GM12878 (cell line): ENCODE measurements at regions of chr2 and their contacts with region 1.

Region 1: GRCh38 chr2:224927646-224928173 is 114.6 kb downstream of the DOCK10 start:
- DNase-seq: no peak
- ATAC-seq: no peak
- H3K4me3 ChIP-seq: no peak overlapping the region
- H3K27ac ChIP-seq: peak overlapping the region; percentile 71
- H3K4me1 ChIP-seq: peaks cover 62% of the 10 kb centered on the region
- H3K27me3 ChIP-seq: no peaks in the 10 kb centered on the region
- CTCF ChIP-seq: no peak
- EP300 ChIP-seq: no peak
- POLR2A ChIP-seq: no peak
- RAD21 ChIP-seq: no peak

Region 2: GRCh38 chr2:224894356-224894755 is 33.4 kb before region 1 on chr2:
- CTCF ChIA-PET with region 1: interaction called, 11 read pairs
- POLR2A ChIA-PET with region 1: interaction called, 4 read pairs
- RAD21 ChIA-PET with region 1: interaction called, 17 read pairs
- SMC1A ChIA-PET with region 1: interaction called, 26 read pairs
- in situ Hi-C with region 1: no loop called
- intact Hi-C with region 1: loop called (anchors 2 kb)
- DNase-seq: peak; percentile 71
- ATAC-seq: peak; percentile 90
- H3K4me3 ChIP-seq: peak overlapping the region; percentile 13; the same call in 1 of the 2 replicates
- H3K27ac ChIP-seq: peak overlapping the region; percentile 88
- H3K4me1 ChIP-seq: peaks cover 40% of the 10 kb centered on the region
- H3K27me3 ChIP-seq: no peaks in the 10 kb centered on the region
- CTCF ChIP-seq: no peak
- EP300 ChIP-seq: no peak
- POLR2A ChIP-seq: no peak
- RAD21 ChIP-seq: no peak

Region 3: DNA sequence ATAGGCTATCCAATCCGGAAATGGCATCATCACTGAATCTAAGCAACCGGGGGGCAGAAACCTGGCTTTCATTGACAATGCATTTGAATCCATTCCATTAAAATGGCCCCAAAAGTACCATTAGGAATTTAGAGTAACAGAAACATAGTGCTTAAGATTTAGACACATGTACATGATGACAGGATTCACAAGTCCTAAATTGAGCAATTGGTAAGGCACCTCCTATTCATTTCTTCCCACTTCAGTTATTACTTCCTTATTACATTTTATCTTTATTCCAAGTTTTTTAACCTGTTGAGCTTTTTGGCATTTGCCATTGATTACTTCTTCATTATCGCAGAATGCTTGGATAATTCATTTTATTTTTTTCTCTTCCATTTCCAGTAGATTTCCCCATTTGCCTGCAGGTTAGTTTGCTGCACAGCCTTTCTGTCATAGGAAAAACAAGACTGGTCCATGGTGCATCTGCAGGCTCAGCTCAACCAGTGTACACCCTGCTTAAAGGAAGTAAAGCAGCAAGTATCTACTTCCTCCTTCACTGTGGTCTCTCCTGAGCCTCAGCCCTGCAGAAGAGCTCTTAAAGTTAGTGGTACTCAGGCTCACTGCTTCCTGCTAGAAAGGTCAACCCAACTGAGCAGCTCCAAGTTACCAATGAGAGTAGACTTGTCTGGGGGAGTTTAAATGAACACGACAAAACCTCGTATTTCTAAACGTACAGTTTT is 25.4 kb after region 1 on chr2:
- CTCF ChIA-PET with region 1: interaction called, 5 read pairs
- POLR2A ChIA-PET with region 1: interaction called, 6 read pairs
- RAD21 ChIA-PET with region 1: interaction called, 10 read pairs
- SMC1A ChIA-PET with region 1: interaction called, 443 read pairs
- in situ Hi-C with region 1: no loop called
- intact Hi-C with region 1: no loop called
- DNase-seq: no peak
- ATAC-seq: peak; percentile 74
- H3K4me3 ChIP-seq: no peak overlapping the region
- H3K27ac ChIP-seq: 0 out of 2 replicates have a peak overlapping the region, but pooled peaks have one; percentile 6
- H3K4me1 ChIP-seq: peaks cover 74% of the 10 kb centered on the region
- H3K27me3 ChIP-seq: no peaks in the 10 kb centered on the region
- CTCF ChIP-seq: no peak
- EP300 ChIP-seq: no peak
- POLR2A ChIP-seq: no peak
- RAD21 ChIP-seq: no peak

Region 4: DNA sequence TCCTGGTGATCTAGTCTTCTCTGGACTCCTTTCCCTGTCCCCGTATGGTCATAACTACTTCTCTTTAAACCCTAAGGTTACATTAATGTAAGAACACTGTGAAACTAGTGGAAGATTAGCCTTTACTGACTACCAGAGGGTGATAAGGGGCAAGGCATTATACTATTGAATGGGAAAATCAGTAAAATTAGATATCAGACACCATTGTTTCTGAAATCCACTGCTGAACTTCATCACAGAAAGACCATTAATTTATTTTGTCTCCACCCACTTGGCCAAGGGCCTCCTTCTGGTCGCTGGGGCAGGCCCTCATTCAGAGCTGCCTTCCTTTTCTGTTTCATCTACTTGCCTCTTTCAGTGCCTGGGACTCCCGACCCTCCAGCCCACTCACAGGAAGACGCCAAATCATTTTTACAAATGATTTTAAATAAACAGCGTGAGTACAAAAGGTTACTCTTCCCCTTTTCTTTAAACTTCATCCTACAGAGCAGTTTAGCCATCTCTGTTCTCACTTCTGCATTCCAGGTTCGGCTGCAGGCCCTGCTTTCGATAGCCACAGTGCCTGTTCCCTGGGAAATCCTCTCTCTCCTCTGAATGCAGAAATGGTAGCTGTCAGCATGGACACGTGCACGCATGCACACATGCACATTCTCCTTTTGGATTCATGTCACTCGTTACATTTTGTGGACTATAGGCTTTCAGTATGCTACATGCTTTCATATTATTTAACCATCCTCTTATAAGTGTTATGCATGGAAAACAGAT is 184.8 kb after region 1 on chr2:
- CTCF ChIA-PET with region 1: no interaction called
- POLR2A ChIA-PET with region 1: no interaction called
- RAD21 ChIA-PET with region 1: no interaction called
- SMC1A ChIA-PET with region 1: no interaction called
- in situ Hi-C with region 1: no loop called
- intact Hi-C with region 1: loop called (anchors 5 kb)
- DNase-seq: peak; percentile 13
- ATAC-seq: peak; percentile 86
- H3K4me3 ChIP-seq: no peak overlapping the region
- H3K27ac ChIP-seq: no peak overlapping the region
- H3K4me1 ChIP-seq: peaks cover 9% of the 10 kb centered on the region
- H3K27me3 ChIP-seq: no peaks in the 10 kb centered on the region
- CTCF ChIP-seq: no peak
- EP300 ChIP-seq: 0 out of 4 replicates have a peak, but pooled peaks of 1 of the 2 experiments have one; percentile 22
- POLR2A ChIP-seq: no peak
- RAD21 ChIP-seq: no peak